HEK293T (cell line): ENCODE measurements at regions of chr2 and their contacts with region 1.

Region 1: GRCh38 chr2:46873375-46874032 is 42.1 kb downstream of the MCFD2 start:
- DNase-seq: peak; percentile 53

Region 2: GRCh38 chr2:46893269-46893945 is 19.9 kb after region 1 on chr2:
- CTCF ChIA-PET with region 1: no interaction called
- POLR2A ChIA-PET with region 1: no interaction called
- DNase-seq: no peak

Region 3: DNA sequence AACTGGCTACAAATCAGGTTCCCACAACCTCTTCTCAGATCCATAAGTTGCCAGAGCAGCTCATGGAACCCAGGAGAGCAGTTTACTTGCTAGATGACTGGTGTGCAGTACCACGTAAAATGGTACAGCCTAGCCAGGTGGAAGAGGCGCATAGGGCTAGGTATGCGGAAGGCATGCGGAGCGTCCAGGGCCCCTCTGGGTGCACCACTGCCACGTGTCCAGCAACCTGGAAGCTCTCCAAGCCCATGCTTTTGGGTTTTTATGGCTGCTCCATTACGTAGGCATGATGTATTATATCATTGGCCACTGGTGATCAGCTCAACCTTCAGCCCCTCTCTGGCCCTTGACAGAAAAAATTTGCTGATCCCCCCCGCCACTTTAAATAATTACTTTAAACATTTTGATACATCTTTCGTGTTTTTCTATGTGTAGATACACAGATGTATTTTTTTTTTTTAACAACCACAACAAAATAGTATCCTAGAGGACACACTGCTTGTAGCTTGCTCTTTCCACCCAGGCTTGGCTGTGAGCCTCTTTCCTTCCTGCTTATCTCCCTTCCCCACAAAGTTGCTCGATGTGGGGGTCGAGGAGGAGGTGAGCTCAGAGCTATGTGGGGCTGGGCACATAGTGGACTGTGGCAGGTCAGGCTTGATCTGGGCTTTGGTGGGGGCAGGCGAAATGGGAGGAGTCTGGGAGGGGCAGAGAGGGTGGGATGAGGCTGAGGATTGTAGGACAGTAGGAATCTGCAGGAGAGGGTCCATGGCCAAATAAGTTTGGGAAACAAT is 107.5 kb after region 1 on chr2:
- CTCF ChIA-PET with region 1: interaction called, 10 read pairs
- POLR2A ChIA-PET with region 1: no interaction called
- DNase-seq: no peak